Esophagus muscularis mucosa (tissue), 4 donors: ENCODE measurements at regions of chr3 and their contacts with region 1.

Region 1: GRCh38 chr3:11096266-11097135 is 57.8 kb upstream of the HRH1 start:
- DNase-seq: no peak
- H3K4me3 ChIP-seq: peak overlapping the region; percentile 41 to 56 (median 47)
- H3K27ac ChIP-seq: peak overlapping the region; percentile 73 to 89 (median 80)
- H3K4me1 ChIP-seq: peaks cover 5 to 37% (median 31%) of the 10 kb centered on the region in 4 donors
- H3K27me3 ChIP-seq: no peaks in the 10 kb centered on the region
- CTCF ChIP-seq: no peak
- EP300 ChIP-seq: peak; percentile 71
- POLR2A ChIP-seq: no peak

Region 2: DNA sequence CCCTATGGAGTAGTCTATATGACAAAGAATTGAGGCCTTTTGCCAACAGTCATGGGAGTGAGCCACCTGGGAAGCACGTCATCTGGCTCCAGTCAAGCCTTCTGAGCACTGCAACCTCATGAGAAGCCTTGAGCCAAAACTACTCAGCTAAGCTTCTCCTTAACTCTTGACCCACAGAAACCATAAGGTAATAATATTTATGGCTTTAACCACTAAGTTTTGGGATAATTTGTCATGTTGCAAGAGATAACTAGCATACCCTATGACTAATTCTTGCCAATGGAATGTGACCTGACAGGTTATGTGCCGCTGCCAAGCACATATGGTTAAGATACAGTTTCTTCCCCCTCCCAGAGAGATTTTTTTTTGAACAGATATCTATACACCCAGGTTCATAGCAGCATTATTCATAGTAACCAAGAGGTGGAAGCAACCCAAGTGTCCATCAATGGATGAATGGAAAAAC is 292.3 kb before region 1 on chr3:
- intact Hi-C with region 1: no loop called
- DNase-seq: no peak
- H3K4me3 ChIP-seq: no peak overlapping the region
- H3K27ac ChIP-seq: no peak overlapping the region
- H3K4me1 ChIP-seq: no peaks in the 10 kb centered on the region
- H3K27me3 ChIP-seq: peaks cover 0 to 16% (median 0%) of the 10 kb centered on the region in 4 donors
- CTCF ChIP-seq: no peak
- EP300 ChIP-seq: no peak
- POLR2A ChIP-seq: no peak

Region 3: GRCh38 chr3:11136871-11137626 is 40.5 kb after region 1 on chr3:
- intact Hi-C with region 1: loop called (anchors 5 kb)
- DNase-seq: peak; percentile 96
- H3K4me3 ChIP-seq: peak overlapping the region; percentile 36 to 45 (median 42)
- H3K27ac ChIP-seq: peak overlapping the region; percentile 81 to 87 (median 85)
- H3K4me1 ChIP-seq: peaks cover 9 to 38% (median 25%) of the 10 kb centered on the region in 4 donors
- H3K27me3 ChIP-seq: no peaks in the 10 kb centered on the region
- CTCF ChIP-seq: no peak
- EP300 ChIP-seq: peak; percentile 99
- POLR2A ChIP-seq: no peak